Heart right ventricle (tissue), 16 donors: ENCODE measurements at regions of chr7 and their contacts with region 1.

Region 1: GRCh38 chr7:130982160-130982638 is 248.2 kb upstream of the KLF14 start:
- DNase-seq: no peak
- ATAC-seq: peak in 4 of 8 donors; percentile 41 to 50 (median 43)
- H3K4me3 ChIP-seq: no peak overlapping the region
- H3K27ac ChIP-seq: peak overlapping the region in 2 of 10 donors; percentile 32 to 41
- H3K4me1 ChIP-seq: peaks cover 12 to 82% (median 59%) of the 10 kb centered on the region in 9 donors
- H3K27me3 ChIP-seq: no peaks in the 10 kb centered on the region
- CTCF ChIP-seq: peak in 8 of 9 donors; percentile 16 to 73 (median 64)

Region 2: DNA sequence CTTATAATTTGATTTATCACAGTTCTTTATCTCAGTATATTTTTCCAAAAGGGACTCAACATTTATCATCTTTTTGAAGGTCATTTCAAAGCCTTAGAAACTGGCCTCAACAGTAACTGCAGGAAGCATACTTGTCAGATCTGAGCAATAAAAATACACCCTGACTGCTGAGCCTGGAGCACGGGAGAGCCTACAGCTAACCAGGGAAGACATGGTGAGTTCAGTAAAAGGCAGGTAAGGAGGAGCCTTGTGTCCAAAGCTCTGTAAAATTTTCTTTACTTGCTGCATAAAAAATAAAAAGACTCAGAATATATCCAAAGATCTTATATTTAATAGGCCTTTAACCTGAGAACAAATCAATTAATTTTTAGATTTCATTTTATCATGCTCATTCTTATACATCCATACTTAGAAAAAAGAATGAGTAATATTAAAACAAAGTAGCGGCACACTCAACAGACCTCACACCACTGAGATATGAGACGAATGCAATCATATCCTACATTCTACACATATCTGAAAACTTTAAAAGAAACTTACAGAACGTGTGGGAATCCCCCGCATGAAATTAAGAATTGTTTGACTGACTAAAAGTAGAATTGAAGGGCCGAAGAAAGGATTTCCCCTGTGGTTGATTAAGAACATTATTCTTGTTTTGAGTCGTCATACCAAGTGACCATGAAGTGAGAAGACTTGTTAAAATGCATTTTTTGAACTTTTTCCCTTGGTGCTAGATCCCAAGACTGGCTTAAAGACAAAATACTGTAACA is 49.1 kb after region 1 on chr7:
- intact Hi-C with region 1: loop called in 2 of 10 experiments (anchors 5 to 10 kb)
- DNase-seq: no peak
- ATAC-seq: no peak
- H3K4me3 ChIP-seq: no peak overlapping the region
- H3K27ac ChIP-seq: no peak overlapping the region
- H3K4me1 ChIP-seq: peaks cover 6 to 89% (median 60%) of the 10 kb centered on the region in 9 donors
- H3K27me3 ChIP-seq: no peaks in the 10 kb centered on the region
- CTCF ChIP-seq: no peak

Region 3: DNA sequence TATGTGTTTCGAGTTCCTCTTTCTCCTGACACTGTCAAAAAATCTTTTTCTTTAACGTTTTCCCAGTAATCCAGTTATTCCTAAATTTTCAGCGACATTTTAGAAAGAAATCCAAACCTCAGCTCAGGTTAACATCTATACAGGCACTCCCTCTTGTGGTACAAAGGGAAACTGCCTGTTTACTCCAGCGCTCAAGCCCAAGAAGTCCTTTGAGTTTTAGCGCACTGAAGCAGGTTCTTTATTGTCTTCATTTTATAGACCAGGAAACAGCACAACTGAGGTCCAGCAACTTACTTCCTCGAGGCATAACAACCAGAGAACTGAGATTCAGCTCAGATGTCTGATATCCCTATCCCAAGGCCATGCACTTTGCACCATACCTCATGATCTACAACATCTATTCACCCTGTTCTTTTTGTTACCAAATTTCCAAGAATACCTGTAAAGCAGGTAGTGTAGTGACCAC is 58.3 kb after region 1 on chr7:
- intact Hi-C with region 1: loop called in 4 of 10 experiments (anchors 2 to 10 kb)
- DNase-seq: peak in 1 of 2 donors; percentile 71
- ATAC-seq: peak in 7 of 8 donors; percentile 60 to 83 (median 79)
- H3K4me3 ChIP-seq: no peak overlapping the region
- H3K27ac ChIP-seq: peak overlapping the region in 6 of 10 donors; percentile 30 to 79 (median 48)
- H3K4me1 ChIP-seq: peaks cover 0 to 64% (median 42%) of the 10 kb centered on the region in 9 donors
- H3K27me3 ChIP-seq: no peaks in the 10 kb centered on the region
- CTCF ChIP-seq: peak; percentile 76 to 97 (median 89)

Region 4: DNA sequence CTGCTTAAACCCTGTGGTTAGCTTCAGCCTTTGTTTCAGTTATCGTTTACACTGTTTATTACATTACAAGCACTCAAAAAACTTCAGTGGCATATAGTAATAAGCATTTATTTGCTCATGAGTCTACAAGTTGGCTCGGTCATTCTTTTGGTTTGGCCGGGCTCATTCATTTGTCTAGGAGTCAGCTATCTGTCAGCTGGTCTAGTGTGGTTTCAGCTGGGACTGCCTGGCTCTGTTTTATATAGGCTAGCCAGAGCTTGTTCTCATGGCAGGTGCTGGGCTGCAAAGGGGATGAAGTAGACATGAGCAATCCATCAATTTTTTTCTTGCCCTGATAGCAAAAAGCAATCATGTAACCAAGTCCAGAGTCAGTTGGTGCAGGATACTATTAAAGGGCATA is 449.1 kb after region 1 on chr7:
- intact Hi-C with region 1: loop called in 1 of 10 experiments (anchors 10 kb)
- DNase-seq: peak in 1 of 2 donors; percentile 44
- ATAC-seq: peak; percentile 61 to 92 (median 83)
- H3K4me3 ChIP-seq: no peak overlapping the region
- H3K27ac ChIP-seq: peak overlapping the region in 1 of 10 donors; percentile 18
- H3K4me1 ChIP-seq: peaks cover 0 to 32% (median 17%) of the 10 kb centered on the region in 9 donors
- H3K27me3 ChIP-seq: no peaks in the 10 kb centered on the region
- CTCF ChIP-seq: no peak